ENCODE measurements at regions of chr10 and their contacts with region 1.

Region 1: DNA sequence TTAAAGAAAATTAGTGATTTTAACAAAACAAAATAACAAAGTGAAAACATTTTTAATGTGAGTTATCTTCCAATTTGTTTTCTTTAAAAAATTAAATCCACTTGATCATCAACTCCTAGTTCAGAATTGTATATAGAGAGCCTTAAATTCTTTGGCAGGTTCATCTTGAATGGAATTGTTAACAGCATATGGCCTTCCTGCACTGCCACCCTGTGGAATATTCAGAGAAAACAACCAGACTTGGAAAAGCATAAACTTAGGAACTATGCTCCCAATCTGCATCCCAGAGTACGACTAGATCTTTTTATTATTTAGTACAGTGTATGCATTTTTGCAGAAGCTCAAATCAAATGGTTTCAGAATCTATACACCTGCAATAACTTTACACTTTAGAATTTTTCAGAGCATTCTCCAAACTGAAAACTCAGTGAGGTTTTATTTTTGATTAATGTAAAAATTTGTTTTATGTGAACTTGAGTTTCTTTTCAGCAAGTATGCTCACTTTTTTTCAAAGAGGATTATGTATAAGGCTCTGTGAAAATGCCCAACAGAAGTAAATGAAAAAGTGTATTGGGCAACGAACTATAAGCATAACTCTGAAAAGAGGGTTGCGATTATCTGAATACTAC is 44.9 kb upstream of the ANK3 start:
- DNase-seq: peak; percentile 49
- H3K4me3 ChIP-seq: no peak overlapping the region
- H3K27ac ChIP-seq: no peak overlapping the region
- H3K4me1 ChIP-seq: no peaks in the 10 kb centered on the region
- H3K27me3 ChIP-seq: no peaks in the 10 kb centered on the region
- CTCF ChIP-seq: peak; percentile 20 to 84 (median 69)
- POLR2A ChIP-seq: no peak

Region 2: GRCh38 chr10:60099998-60100747 is 334.4 kb before region 1 on chr10:
- intact Hi-C with region 1: loop called (anchors 5 kb)
- DNase-seq: no peak
- H3K4me3 ChIP-seq: no peak overlapping the region
- H3K27ac ChIP-seq: no peak overlapping the region
- H3K4me1 ChIP-seq: no peaks in the 10 kb centered on the region
- H3K27me3 ChIP-seq: no peaks in the 10 kb centered on the region
- CTCF ChIP-seq: peak; percentile 35 to 78 (median 65)
- POLR2A ChIP-seq: no peak

Region 3: DNA sequence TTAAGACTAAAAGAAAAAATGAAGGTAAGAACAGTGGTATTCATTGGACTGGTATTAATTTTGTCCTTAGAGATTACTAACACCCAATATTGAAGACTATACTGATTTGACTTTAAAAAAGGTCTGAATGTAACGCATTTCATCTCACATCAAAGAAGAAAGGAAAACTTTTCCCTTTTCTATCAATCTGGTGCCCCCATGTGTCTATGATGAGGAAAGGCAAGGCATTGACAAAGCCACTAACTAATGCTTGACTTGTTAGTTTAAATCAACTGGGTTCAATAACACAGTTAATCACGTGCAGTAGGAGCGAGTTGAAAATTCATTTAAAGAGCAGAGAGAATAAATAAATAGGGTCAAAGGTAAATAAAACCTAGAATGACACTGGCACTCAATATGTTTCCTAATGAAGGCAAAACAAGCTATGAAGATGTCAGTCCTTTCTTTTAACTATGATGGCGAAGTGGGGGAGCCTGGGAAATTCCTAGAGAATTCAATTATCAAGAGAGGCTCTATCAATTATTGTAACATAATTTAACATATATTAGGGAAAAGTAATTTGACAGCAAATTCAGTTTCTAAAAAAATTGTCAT is 225.8 kb before region 1 on chr10:
- intact Hi-C with region 1: no loop called
- DNase-seq: no peak
- H3K4me3 ChIP-seq: no peak overlapping the region
- H3K27ac ChIP-seq: no peak overlapping the region
- H3K4me1 ChIP-seq: no peaks in the 10 kb centered on the region
- H3K27me3 ChIP-seq: no peaks in the 10 kb centered on the region
- CTCF ChIP-seq: peak in 3 of 4 experiments; percentile 46 to 77 (median 76)
- POLR2A ChIP-seq: no peak

Region 4: GRCh38 chr10:60237977-60238758 is 196.4 kb before region 1 on chr10:
- intact Hi-C with region 1: loop called (anchors 2 kb)
- DNase-seq: peak; percentile 34
- H3K4me3 ChIP-seq: no peak overlapping the region
- H3K27ac ChIP-seq: no peak overlapping the region
- H3K4me1 ChIP-seq: no peaks in the 10 kb centered on the region
- H3K27me3 ChIP-seq: no peaks in the 10 kb centered on the region
- CTCF ChIP-seq: peak in 2 of 4 experiments; percentile 30 to 42
- POLR2A ChIP-seq: no peak

Region 5: DNA sequence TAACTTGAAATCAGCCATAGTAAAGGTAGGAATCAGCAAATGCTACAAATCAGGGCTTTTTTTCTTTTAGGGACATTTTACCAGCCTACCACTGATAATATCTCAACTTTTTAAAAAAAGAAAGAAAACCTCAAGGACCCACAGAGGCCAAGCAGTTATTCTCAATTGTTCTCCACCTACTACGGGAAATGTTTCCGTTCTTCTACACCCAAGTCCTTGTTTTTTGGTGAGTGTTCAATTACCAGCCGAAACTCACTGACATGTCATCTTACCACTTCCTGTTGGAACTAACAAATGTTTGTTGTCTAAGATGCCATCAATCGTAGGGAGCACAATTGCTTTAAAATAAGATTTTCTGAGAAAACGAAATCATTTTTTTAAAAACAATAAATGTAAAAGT is 293.5 kb after region 1 on chr10:
- intact Hi-C with region 1: no loop called
- DNase-seq: no peak
- H3K4me3 ChIP-seq: no peak overlapping the region
- H3K27ac ChIP-seq: no peak overlapping the region
- H3K4me1 ChIP-seq: peaks cover 5% of the 10 kb centered on the region
- H3K27me3 ChIP-seq: no peaks in the 10 kb centered on the region
- CTCF ChIP-seq: no peak
- POLR2A ChIP-seq: no peak